ENCODE measurements at regions of chr12 and their contacts with region 1.

Region 1: DNA sequence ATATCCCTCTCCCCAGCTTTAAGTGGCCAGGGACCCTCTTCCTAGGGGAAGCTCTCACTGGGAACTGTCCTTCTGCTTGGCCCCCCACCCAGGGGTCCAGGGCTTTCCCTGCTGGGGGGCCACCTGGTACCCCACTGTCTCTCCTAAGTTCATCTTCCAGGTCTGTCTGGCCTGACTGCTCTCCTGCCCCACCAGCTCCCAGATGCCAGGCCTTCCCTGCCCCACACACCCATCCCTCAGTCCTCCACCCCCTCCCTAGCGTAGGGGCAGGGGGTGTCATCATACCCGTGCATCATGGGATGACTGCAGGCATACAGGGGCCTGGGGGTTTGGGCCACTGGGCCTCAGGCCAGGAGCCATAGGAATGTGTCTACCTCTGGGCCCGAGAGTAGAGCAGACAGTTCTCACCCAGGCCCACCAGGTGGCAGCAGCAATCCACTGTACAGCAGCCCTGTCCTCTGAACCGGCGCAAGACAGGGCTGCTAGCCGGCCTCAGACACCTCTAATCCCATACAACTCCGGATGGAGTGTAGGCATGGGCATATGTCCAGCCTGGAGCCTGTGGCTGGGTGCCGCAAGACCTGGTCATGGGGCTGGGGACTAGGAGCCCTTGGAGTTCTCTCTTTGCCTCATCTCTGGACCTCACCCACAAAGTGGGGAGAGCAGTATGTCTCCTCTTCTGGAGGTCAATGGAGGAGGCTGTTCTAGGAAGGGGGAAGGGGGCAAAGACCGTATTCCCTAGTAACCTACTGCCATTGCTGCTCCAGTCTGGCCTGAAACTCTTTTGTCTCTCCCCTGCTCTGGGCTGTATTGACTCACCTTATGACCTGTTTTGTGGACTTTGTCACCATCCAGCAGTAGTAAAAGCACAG is 10.0 kb upstream of the SMARCD1 start:
- DNase-seq: peak; percentile 85 to 92
- ATAC-seq: peak; percentile 92 to 95 (median 95)
- H3K4me3 ChIP-seq: no peak overlapping the region
- H3K27ac ChIP-seq: no peak overlapping the region
- H3K4me1 ChIP-seq: peaks cover 4% of the 10 kb centered on the region
- H3K27me3 ChIP-seq: no peaks in the 10 kb centered on the region
- CTCF ChIP-seq: peak; percentile 95

Region 2: GRCh38 chr12:49872781-49873181 is 202.4 kb before region 1 on chr12:
- intact Hi-C with region 1: loop called in 1 of 2 experiments (anchors 5 kb)
- DNase-seq: no peak
- ATAC-seq: no peak
- H3K4me3 ChIP-seq: no peak overlapping the region
- H3K27ac ChIP-seq: no peak overlapping the region
- H3K4me1 ChIP-seq: peaks cover 14% of the 10 kb centered on the region
- H3K27me3 ChIP-seq: no peaks in the 10 kb centered on the region
- CTCF ChIP-seq: no peak

Region 3: DNA sequence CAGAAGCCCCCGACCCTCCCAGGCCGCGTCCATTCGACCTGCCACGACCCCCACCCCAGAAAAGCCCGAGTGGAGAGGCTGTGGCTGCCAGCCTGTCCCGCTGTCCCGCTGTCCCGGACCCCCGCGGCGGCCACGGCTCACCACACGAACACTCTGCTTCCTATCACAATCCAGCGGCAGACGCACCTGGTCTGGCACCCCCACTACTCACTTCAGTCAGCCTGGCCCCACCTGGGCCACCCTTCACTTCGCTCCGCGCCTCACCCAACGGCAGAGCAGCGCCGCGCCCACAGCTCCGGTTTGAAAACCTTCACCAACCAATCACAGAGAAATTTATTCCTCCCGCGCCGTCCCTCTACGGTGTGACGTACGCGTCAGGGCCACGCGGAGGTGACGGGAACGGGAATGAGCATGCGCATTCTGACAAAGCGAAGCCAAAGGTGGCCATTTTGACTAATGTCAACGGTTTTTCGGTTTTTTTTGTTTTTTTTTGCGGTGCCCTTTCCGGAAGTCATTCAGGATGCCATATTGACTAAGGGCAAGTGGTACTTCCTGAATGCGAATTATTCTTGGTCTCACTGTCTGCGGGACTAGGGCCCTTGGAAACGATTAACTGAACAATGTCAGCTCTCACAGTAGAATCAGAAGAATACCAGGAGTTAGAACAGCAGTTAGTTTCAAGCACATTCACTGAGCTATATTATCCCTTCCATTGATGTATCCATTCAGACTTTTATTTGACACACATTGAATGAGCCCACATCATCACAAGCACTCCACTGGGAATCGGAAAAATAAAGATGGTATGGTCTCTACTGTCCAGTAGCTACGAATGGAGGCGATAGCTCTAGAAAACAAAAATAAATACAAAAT is 49.7 kb before region 1 on chr12 and contains the start of gene RACGAP1:
- intact Hi-C with region 1: no loop called
- DNase-seq: peak; percentile 94 to 97
- ATAC-seq: peak; percentile 100
- H3K4me3 ChIP-seq: peak within 1 kb of the TSS; percentile 76
- H3K27ac ChIP-seq: peak within 1 kb of the TSS; percentile 32
- H3K4me1 ChIP-seq: no peaks in the 10 kb centered on the region
- H3K27me3 ChIP-seq: no peaks in the 10 kb centered on the region
- CTCF ChIP-seq: no peak
- total RNA-seq, gene RACGAP1: 4.6 to 6.1 (median 5.2) TPM

Region 4: GRCh38 chr12:50043854-50044253 is 31.3 kb before region 1 on chr12:
- intact Hi-C with region 1: loop called in 1 of 2 experiments (anchors 1 kb)
- DNase-seq: no peak
- ATAC-seq: no peak
- H3K4me3 ChIP-seq: no peak overlapping the region
- H3K27ac ChIP-seq: no peak overlapping the region
- H3K4me1 ChIP-seq: no peaks in the 10 kb centered on the region
- H3K27me3 ChIP-seq: peaks cover 0 to 4% (median 0%) of the 10 kb centered on the region in 3 donors
- CTCF ChIP-seq: no peak